ENCODE measurements at regions of chr5 and their contacts with region 1.

Region 1: DNA sequence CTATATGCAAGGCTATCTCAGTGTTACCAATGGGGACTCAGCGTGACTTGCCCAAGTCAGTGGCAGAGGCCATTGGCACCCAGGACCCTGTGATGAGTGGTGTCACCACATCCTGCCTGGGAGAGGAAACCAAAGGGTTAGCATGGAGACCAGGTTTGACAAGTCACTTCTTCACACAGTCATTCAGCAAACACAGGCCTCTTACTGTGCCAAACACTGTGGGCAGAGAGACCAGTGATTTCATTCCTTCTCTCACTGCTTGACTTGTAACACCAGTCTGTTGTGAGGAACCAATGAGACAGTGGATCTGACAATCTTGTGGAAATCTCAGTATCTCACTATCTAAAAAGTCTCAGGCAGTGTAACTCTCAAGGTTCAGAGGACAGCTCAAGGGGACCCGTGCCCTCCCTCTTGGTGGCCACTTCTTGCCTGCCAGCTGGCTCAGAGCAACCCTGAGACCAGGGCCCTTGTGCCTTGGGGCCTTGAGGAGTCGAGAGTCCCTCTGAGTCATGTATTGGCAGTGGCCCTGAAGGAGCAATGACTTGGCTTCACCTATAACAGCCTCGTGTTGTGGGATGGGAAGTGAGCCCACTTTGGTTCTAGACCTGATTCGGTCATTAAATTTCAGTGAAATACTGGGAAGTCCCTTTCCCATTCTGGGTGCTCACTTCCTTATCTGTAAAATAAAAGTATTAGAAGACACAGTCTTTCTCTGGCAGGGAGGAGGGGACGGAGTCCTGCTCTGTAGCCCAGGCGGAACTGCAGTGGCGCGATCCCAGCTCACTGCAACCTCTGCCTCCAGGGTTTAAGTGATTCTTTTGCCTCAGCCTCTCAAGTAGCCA is 1.6 kb downstream of the FABP6 start:
- DNase-seq: peak; percentile 74
- ATAC-seq: peak; percentile 83
- H3K4me3 ChIP-seq: no peak overlapping the region
- H3K27ac ChIP-seq: peak overlapping the region; percentile 77
- H3K4me1 ChIP-seq: peaks cover 27% of the 10 kb centered on the region
- H3K27me3 ChIP-seq: no peaks in the 10 kb centered on the region
- CTCF ChIP-seq: no peak
- EP300 ChIP-seq: peak; percentile 11 to 52; a peak in 2 of 4 replicates
- POLR2A ChIP-seq: no peak
- RAD21 ChIP-seq: no peak

Region 2: DNA sequence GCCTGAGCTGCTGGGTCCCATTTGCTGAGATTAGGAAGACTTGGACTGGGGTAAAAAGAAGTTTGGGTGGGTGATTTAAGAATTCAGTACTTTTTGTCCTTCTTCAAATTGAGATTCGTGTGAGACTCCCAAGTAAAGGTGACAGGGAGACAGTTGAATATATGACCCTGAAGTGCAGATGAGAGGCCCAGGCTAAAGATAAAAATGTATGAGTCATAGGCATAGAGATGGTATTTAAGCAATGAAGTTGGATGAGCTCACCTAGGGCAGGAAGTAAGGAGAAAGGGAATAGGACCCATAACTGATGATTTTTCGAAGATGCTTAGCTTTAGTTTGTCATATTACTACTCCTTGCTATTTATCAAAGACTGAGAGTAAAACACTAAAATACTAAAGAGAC is 570.5 kb before region 1 on chr5:
- CTCF ChIA-PET with region 1: no interaction called
- POLR2A ChIA-PET with region 1: no interaction called
- RAD21 ChIA-PET with region 1: no interaction called
- SMC1A ChIA-PET with region 1: no interaction called
- in situ Hi-C with region 1: no loop called
- intact Hi-C with region 1: no loop called
- DNase-seq: no peak
- ATAC-seq: no peak
- H3K4me3 ChIP-seq: no peak overlapping the region
- H3K27ac ChIP-seq: no peak overlapping the region
- H3K4me1 ChIP-seq: no peaks in the 10 kb centered on the region
- H3K27me3 ChIP-seq: no peaks in the 10 kb centered on the region
- CTCF ChIP-seq: no peak
- EP300 ChIP-seq: no peak
- POLR2A ChIP-seq: no peak
- RAD21 ChIP-seq: no peak

Region 3: GRCh38 chr5:160245506-160246086 is 14.7 kb after region 1 on chr5:
- CTCF ChIA-PET with region 1: interaction called, 34 read pairs
- POLR2A ChIA-PET with region 1: interaction called, 3 read pairs
- RAD21 ChIA-PET with region 1: interaction called, 7 read pairs
- SMC1A ChIA-PET with region 1: interaction called, 6 read pairs
- in situ Hi-C with region 1: no loop called
- intact Hi-C with region 1: no loop called
- DNase-seq: no peak
- ATAC-seq: no peak
- H3K4me3 ChIP-seq: no peak overlapping the region
- H3K27ac ChIP-seq: no peak overlapping the region
- H3K4me1 ChIP-seq: peaks cover 5% of the 10 kb centered on the region
- H3K27me3 ChIP-seq: no peaks in the 10 kb centered on the region
- CTCF ChIP-seq: no peak
- EP300 ChIP-seq: no peak
- POLR2A ChIP-seq: no peak
- RAD21 ChIP-seq: no peak

Region 4: DNA sequence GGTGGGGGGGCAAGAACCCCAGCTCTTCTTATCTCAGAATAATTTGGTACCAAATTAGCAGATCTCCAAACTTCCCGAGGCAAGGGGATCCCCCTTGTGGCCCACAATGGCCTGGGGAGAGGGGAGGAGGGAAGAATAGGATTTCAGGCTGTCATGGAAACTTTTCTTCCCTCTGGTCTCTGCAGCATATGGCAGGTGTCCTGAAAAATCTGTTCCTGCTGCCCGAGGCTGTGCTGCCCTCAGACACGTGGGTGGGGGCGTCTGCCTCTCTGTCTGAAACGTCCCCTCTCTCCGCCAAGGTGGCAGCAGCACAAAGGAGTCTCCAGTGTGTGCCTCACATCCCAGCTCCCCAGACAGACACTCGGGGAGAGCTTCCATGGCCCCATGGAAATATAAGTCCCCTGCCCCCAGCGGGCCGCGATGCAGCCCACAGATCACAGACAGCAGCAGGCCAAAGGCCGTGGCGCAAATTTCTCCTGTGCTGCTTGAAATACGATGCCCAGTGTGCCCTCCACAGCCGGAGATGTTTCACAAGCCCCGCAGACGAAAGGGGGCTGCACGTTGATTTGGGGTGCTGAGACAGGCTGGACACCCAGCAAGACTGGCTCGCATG is 47.5 kb after region 1 on chr5:
- CTCF ChIA-PET with region 1: no interaction called
- POLR2A ChIA-PET with region 1: no interaction called
- RAD21 ChIA-PET with region 1: no interaction called
- SMC1A ChIA-PET with region 1: no interaction called
- in situ Hi-C with region 1: no loop called
- intact Hi-C with region 1: no loop called
- DNase-seq: no peak
- ATAC-seq: no peak
- H3K4me3 ChIP-seq: no peak overlapping the region
- H3K27ac ChIP-seq: no peak overlapping the region
- H3K4me1 ChIP-seq: 0 out of 2 replicates have a peak, but pooled peaks cover 5% of the 10 kb centered on the region
- H3K27me3 ChIP-seq: no peaks in the 10 kb centered on the region
- CTCF ChIP-seq: no peak
- EP300 ChIP-seq: no peak
- POLR2A ChIP-seq: no peak
- RAD21 ChIP-seq: no peak

Region 5: DNA sequence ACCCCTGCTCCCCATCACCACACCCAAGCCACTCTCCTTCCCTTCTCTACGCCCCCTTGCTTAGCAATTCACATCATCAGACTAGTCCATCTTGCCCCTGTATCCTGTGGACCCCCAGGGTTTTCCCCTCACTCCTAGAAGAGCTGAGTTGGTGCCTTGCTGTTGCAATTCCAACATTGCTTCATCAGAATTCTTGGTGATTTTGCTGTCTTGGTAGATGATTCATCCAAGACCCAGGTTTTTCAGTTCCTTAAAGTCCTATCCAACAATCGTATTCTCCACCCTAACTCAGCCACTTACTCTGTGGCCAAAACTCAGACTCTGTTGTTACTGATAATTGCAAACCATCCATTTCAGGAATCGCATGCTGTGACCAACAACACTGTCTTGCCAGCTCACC is 102.8 kb after region 1 on chr5:
- CTCF ChIA-PET with region 1: no interaction called
- POLR2A ChIA-PET with region 1: no interaction called
- RAD21 ChIA-PET with region 1: no interaction called
- SMC1A ChIA-PET with region 1: no interaction called
- in situ Hi-C with region 1: no loop called
- intact Hi-C with region 1: no loop called
- DNase-seq: no peak
- ATAC-seq: no peak
- H3K4me3 ChIP-seq: no peak overlapping the region
- H3K27ac ChIP-seq: no peak overlapping the region
- H3K4me1 ChIP-seq: no peaks in the 10 kb centered on the region
- H3K27me3 ChIP-seq: no peaks in the 10 kb centered on the region; a peak in 1 of 4 replicates
- CTCF ChIP-seq: no peak
- EP300 ChIP-seq: no peak
- POLR2A ChIP-seq: no peak
- RAD21 ChIP-seq: no peak

Measured in GM12878 (cell line).